ENCODE measurements at regions of chr2 and their contacts with region 1.

Region 1: DNA sequence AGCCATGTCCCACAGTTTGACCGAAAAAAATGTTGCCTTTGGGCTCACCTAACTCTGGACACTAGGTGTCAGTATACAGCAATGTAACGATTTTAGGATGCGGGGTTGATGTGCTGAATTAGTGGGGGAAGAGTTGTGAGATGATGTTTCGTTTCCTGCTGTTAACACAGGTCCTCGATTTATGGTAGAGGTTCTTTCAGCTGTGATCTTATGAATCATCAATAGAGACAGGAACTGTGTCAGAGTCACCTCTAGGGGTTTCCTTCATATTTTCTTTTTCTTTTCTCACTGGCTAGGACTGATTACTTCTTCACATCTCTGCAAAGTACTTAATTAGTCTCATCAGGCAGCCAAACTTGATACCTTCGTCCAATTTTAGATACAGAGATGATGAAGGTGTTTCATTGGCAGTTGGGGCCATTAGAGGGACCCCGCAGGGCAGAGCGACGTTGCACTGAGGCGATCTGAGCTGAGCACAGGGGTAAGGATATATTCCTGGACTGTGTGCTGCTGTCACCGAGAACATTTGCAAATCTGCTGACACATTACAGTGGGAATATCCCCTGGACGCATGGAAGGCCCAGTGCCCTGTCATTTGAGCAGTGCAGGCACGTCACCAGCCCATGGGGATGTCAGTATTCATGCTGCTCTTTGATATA is 10.2 kb upstream of the MMADHC start:
- DNase-seq: peak; percentile 6 to 84 (median 45)
- ATAC-seq: peak; percentile 96
- H3K4me3 ChIP-seq: no peak overlapping the region
- H3K4me3 Mint-ChIP-seq: peak overlapping the region; percentile 53
- H3K27ac ChIP-seq: peak overlapping the region in 1 of 2 experiments; percentile 14
- H3K27ac Mint-ChIP-seq: no peak overlapping the region
- H3K4me1 ChIP-seq: peaks cover 3% of the 10 kb centered on the region
- H3K4me1 Mint-ChIP-seq: peaks cover 14% of the 10 kb centered on the region
- H3K27me3 ChIP-seq: no peaks in the 10 kb centered on the region
- H3K27me3 Mint-ChIP-seq: peaks cover 13% of the 10 kb centered on the region
- CTCF ChIP-seq: peak; percentile 82

Region 2: DNA sequence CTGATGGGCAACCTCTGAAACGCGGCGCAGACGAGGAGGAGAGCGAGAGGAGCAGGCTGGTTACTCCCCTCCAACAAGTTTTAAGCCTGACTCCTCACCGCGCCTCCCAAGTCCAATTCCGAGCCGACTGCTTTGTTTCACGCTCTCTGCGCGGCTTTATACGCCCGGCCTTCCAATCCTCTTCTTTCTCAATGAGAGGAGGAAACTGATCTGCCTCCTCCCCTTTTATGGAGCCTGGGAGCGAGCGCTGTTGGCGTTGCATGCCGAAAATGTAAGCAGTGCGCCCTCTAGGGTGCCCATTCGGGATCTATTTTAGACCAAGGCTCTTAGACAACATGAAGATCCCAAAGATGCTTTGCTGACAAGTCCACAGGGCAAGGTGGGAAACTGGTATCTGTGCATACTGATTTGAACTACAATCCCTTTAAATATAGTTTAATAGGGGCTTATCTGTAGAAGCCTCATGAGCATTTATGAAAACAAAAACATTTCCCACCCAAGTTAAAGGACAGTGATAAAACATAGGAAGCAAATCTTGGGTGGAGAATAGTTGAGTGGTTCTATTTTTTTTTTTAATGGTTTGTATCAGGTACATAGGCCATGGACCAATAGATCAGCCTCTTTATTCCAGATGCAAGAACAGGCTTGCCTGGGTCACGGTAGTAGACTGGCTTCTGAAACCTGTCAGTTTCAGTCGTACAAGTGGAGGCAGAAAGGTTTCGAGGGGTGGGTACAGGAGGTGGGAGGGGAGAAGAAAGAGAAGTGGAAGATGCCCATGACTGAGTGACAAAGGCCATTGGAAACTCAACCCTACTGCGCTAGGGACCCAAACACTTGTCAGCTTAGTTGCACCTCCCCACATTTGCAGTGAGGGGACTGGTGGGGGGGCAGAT is 890.0 kb after region 1 on chr2 and contains the start of gene RND3:
- CTCF ChIA-PET with region 1: no interaction called
- POLR2A ChIA-PET with region 1: no interaction called
- intact Hi-C with region 1: loop called (anchors 2 to 5 kb)
- DNase-seq: peak in 4 of 9 experiments; percentile 3 to 22 (median 10)
- ATAC-seq: no peak
- H3K4me3 ChIP-seq: no peak within 1 kb of the TSS
- H3K4me3 Mint-ChIP-seq: peak within 1 kb of the TSS; percentile 22
- H3K27ac ChIP-seq: no peak within 1 kb of the TSS
- H3K27ac Mint-ChIP-seq: no peak within 1 kb of the TSS
- H3K4me1 ChIP-seq: no peaks in the 10 kb centered on the region
- H3K4me1 Mint-ChIP-seq: peaks cover 11% of the 10 kb centered on the region
- H3K27me3 ChIP-seq: no peaks in the 10 kb centered on the region
- H3K27me3 Mint-ChIP-seq: peaks cover 39% of the 10 kb centered on the region
- CTCF ChIP-seq: no peak
- total RNA-seq, gene RND3: not detected

Region 3: GRCh38 chr2:150610671-150611279 is 1013.0 kb after region 1 on chr2:
- CTCF ChIA-PET with region 1: no interaction called
- POLR2A ChIA-PET with region 1: no interaction called
- intact Hi-C with region 1: loop called (anchors 2 to 5 kb)
- DNase-seq: peak in 1 of 9 experiments; percentile 4
- ATAC-seq: no peak
- H3K4me3 ChIP-seq: no peak overlapping the region
- H3K4me3 Mint-ChIP-seq: no peak overlapping the region
- H3K27ac ChIP-seq: no peak overlapping the region
- H3K27ac Mint-ChIP-seq: no peak overlapping the region
- H3K4me1 ChIP-seq: no peaks in the 10 kb centered on the region
- H3K4me1 Mint-ChIP-seq: no peaks in the 10 kb centered on the region
- H3K27me3 ChIP-seq: no peaks in the 10 kb centered on the region
- H3K27me3 Mint-ChIP-seq: no peaks in the 10 kb centered on the region
- CTCF ChIP-seq: no peak

Region 4: DNA sequence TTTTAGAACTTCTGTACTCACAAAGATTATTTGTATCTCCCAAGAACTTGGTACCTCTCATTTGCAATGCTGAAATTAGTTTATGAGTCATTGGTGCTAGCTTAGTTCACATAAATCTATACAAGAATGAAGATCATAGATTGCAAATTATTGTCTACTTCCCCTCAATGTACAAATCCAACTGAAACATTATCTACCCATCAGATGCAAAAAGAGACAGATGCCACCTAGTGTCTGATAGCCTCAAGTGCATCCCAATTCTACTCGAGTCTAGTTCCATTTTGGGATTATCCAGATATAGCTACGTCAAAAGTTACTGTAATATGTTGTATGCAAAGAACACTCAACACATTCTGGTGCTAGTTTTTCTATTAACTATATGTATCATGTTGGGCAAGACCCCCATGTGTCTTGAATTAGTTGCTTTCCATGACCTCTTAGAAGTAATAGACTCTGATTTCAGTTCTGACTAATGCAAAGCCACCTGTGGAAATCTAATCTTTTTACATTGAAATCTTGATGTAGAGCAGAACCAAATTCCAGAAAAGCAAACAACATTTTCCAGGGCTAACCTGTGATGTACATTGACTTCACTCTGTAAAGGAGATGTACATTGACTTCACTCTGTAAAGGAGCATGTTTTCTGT is 1453.9 kb after region 1 on chr2:
- CTCF ChIA-PET with region 1: interaction called, 44 read pairs
- POLR2A ChIA-PET with region 1: no interaction called
- intact Hi-C with region 1: loop called (anchors 1 kb)
- DNase-seq: peak in 3 of 9 experiments; percentile 12 to 57 (median 47)
- ATAC-seq: no peak
- H3K4me3 ChIP-seq: no peak overlapping the region
- H3K4me3 Mint-ChIP-seq: no peak overlapping the region
- H3K27ac ChIP-seq: no peak overlapping the region
- H3K27ac Mint-ChIP-seq: no peak overlapping the region
- H3K4me1 ChIP-seq: no peaks in the 10 kb centered on the region
- H3K4me1 Mint-ChIP-seq: no peaks in the 10 kb centered on the region
- H3K27me3 ChIP-seq: peaks cover 0 to 3% of the 10 kb centered on the region in 2 experiments
- H3K27me3 Mint-ChIP-seq: peaks cover 11% of the 10 kb centered on the region
- CTCF ChIP-seq: peak; percentile 79

Region 5: GRCh38 chr2:151238527-151239487 is 1641.0 kb after region 1 on chr2:
- CTCF ChIA-PET with region 1: interaction called, 53 read pairs
- POLR2A ChIA-PET with region 1: no interaction called
- intact Hi-C with region 1: loop called (anchors 1 kb)
- DNase-seq: peak in 6 of 9 experiments; percentile 5 to 68 (median 30)
- ATAC-seq: peak; percentile 78
- H3K4me3 ChIP-seq: no peak overlapping the region
- H3K4me3 Mint-ChIP-seq: no peak overlapping the region
- H3K27ac ChIP-seq: no peak overlapping the region
- H3K27ac Mint-ChIP-seq: no peak overlapping the region
- H3K4me1 ChIP-seq: no peaks in the 10 kb centered on the region
- H3K4me1 Mint-ChIP-seq: no peaks in the 10 kb centered on the region
- H3K27me3 ChIP-seq: no peaks in the 10 kb centered on the region
- H3K27me3 Mint-ChIP-seq: peaks cover 2% of the 10 kb centered on the region
- CTCF ChIP-seq: peak; percentile 88